Activated naive CD4-positive, alpha-beta T cell treated with anti-CD3 and anti-CD28 coated beads, Interleukin-2, amount 10 ng/mL, durations not matched to agents 7 days and 5 days (primary cell): ENCODE measurements at regions of chr17 and their contacts with region 1.

Region 1: DNA sequence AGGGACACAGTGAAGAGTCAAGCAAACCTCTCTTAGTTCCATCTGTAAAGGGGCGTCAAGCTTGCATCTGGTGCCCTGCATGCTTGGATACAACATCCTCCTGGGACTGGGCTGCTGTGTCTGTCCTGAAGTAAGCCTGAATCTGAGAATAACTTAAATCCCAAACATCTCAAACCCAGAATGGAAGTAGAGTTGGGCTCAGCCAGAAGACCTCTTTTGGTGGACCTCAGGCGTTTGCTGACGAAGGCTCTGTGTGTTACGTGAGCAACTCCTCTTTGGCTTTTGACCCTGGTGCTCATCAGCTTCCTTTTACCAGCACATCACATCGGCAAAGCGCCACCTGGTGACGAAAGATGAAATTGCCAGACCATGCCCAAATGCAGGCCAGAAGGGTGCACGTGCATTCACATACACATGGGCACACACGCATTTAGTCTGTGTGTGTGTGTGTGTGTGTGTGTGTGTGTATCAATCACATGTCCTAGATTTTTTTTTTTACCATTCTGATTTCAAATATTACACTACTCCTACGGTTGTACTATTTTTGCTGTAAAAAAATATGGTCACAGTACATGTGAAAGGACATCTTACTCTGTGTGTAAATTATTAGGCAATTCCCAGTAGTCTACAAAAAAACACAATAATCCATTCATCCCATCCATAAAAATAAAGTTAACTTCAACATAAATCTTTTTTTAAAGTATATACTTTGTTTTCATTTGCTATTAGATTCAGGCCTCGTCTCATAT is 41.1 kb upstream of the FOXJ1 start:
- DNase-seq: peak; percentile 97
- H3K4me3 Mint-ChIP-seq: peak overlapping the region; percentile 57
- H3K27ac Mint-ChIP-seq: peak overlapping the region; percentile 96
- H3K4me1 Mint-ChIP-seq: peaks cover 79% of the 10 kb centered on the region
- H3K27me3 Mint-ChIP-seq: no peaks in the 10 kb centered on the region

Region 2: DNA sequence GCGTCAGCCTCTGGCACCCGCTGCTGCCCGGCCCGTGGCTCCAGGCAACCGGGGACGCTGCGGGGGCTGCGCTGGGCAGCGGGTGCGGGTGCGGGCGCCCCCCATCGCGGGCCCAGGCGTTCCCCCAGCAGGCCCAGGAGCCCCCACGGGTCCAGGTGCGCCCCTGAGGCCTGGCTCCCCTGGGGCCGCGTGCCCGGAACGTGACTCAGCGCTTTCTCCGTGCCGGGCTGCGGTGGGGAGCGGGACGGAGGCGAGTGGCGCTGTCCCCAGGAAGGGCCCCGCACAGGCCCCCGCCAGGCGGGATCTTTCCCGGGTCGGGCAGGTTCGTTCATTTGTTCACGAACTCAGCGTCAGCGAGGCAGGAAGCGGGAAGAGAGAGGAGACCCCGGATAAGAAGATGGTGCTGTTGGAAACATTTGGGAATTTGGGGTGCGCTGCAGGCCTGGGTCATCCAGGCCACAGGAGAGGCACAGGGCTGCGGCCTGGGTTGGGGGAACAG is 60.2 kb before region 1 on chr17:
- CTCF ChIA-PET with region 1: interaction called, 125 read pairs
- DNase-seq: no peak
- H3K4me3 Mint-ChIP-seq: no peak overlapping the region
- H3K27ac Mint-ChIP-seq: peak overlapping the region; percentile 75
- H3K4me1 Mint-ChIP-seq: peaks cover 43% of the 10 kb centered on the region
- H3K27me3 Mint-ChIP-seq: peaks cover 5% of the 10 kb centered on the region

Region 3: GRCh38 chr17:76141212-76142038 is 40.8 kb before region 1 on chr17 and contains the start of gene FOXJ1:
- CTCF ChIA-PET with region 1: interaction called, 46 read pairs
- DNase-seq: peak; percentile 94
- H3K4me3 Mint-ChIP-seq: peak within 1 kb of the TSS; percentile 73
- H3K27ac Mint-ChIP-seq: peak within 1 kb of the TSS; percentile 96
- H3K4me1 Mint-ChIP-seq: peaks cover 66% of the 10 kb centered on the region
- H3K27me3 Mint-ChIP-seq: peaks cover 45% of the 10 kb centered on the region

Region 4: DNA sequence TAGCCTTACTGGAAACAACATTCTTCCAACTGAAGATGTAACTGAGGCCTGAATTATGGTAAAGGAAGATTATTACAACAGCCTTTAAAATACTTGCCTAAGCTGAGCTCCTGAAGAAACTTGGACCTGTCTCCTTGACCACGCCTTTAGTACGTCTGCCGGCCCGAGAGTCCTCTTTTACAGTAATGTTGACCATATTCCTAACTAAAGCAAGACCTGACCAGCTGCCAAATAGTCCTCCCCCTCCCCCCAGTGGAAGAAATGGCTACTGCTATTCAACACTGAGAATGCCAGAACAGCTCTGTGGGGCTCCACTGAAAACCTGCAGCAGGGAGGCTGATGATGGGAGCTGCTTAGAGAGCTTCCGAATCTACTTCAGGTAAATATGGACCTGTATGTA is 28.6 kb before region 1 on chr17:
- CTCF ChIA-PET with region 1: interaction called, 10 read pairs
- DNase-seq: no peak
- H3K4me3 Mint-ChIP-seq: no peak overlapping the region
- H3K27ac Mint-ChIP-seq: peak overlapping the region; percentile 75
- H3K4me1 Mint-ChIP-seq: peaks cover 50% of the 10 kb centered on the region
- H3K27me3 Mint-ChIP-seq: no peaks in the 10 kb centered on the region

Region 5: DNA sequence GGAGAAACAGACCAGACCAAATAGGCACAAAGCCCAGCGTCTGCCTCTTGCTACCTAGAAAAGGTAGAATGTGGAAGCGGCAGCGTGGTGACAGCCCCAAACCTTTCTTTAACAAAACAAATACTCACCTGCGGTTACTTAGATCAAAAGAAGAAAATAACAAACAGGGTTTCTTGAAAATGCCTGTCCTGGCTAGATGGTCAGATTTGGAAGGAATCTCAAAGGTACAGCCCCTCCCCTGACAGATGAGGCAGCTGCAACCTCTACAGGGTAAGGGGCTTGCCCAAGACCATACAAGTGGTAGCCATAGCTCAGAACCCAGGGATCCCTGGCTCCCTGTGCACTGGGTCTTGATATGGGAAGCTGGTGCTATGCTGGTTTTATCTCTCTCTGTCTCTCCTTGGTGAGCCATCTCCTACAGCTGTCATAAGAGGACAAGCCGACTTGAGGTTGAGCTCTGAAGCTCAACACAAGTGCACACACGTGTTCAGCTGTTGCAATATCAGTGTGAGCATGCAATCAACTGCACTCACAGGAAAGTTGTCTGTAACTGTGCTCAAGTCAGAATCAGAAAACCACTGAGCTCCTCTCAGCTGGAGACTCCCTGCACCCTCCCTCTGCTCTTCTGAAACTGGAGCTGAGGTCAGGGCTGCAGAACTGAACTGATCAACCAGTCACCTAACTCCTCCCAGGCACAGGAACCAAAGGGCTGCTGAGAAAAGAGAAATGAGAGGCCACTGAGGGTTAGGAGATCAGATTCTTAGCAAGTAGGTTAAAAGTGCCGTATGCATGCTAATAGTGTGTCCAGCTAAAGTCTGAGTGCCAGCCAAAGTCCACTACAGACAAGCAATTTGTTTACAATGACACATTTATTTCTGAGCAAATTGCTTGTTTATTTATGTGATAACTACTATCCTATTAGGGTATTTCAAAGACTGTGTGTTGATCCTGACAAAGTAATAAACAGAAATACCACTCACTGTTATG is 64.2 kb after region 1 on chr17:
- CTCF ChIA-PET with region 1: interaction called, 17 read pairs
- DNase-seq: peak; percentile 86
- H3K4me3 Mint-ChIP-seq: peak overlapping the region; percentile 22
- H3K27ac Mint-ChIP-seq: peak overlapping the region; percentile 90
- H3K4me1 Mint-ChIP-seq: peaks cover 88% of the 10 kb centered on the region
- H3K27me3 Mint-ChIP-seq: no peaks in the 10 kb centered on the region

Region 6: GRCh38 chr17:76271669-76272540 is 89.7 kb after region 1 on chr17:
- CTCF ChIA-PET with region 1: interaction called, 23 read pairs
- DNase-seq: peak; percentile 86
- H3K4me3 Mint-ChIP-seq: peak overlapping the region; percentile 96
- H3K27ac Mint-ChIP-seq: peak overlapping the region; percentile 93
- H3K4me1 Mint-ChIP-seq: peaks cover 68% of the 10 kb centered on the region
- H3K27me3 Mint-ChIP-seq: peaks cover 5% of the 10 kb centered on the region